HEK293T (cell line): ENCODE measurements at regions of chr4 and their contacts with region 1.

Region 1: GRCh38 chr4:41257257-41257901 is 651 bp downstream of the UCHL1 start:
- DNase-seq: peak; percentile 30

Region 2: GRCh38 chr4:41081847-41082246 is 175.5 kb before region 1 on chr4:
- CTCF ChIA-PET with region 1: no interaction called
- POLR2A ChIA-PET with region 1: no interaction called
- DNase-seq: no peak

Region 3: DNA sequence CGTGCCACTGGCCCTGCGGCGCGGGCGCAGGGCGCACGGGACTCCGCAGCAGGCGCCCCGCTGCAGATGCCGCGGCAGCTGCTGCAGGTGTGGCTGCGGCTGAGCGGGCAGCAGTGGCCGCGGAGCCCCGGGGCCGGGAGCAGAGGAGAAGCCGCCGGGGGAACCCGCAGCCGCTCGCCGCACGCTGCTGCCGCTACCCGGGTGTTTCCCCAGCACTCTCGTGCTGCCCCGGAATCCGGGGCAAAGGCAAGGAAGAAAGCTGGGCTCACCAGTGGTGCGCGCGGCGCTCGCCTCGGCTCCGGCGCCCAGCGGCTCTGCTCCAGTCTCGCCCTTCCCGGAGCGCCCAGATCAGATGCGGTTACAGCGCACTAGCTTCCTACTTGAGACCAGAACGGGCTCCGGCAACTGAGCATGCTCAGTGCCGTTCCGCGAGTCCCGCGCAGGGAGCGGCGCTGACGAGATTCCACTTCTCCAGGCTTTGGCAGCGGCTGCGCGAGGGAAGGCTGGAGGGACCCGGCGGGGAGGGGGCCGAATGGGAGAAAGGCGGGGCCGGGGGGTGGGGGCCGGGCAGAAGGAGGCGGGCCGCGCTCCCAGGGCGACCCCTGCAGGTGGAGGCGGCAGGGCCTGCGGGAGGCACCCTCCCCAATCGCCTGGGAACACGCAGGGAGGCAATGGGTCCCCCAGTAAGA is 43.1 kb before region 1 on chr4 and contains the start of gene APBB2:
- CTCF ChIA-PET with region 1: interaction called, 4 read pairs
- POLR2A ChIA-PET with region 1: interaction called, 36 read pairs
- DNase-seq: peak; percentile 82

Region 4: GRCh38 chr4:41221850-41222645 is 35.3 kb before region 1 on chr4:
- CTCF ChIA-PET with region 1: no interaction called
- POLR2A ChIA-PET with region 1: interaction called, 36 read pairs
- DNase-seq: no peak

Region 5: GRCh38 chr4:41232406-41232805 is 25.0 kb before region 1 on chr4:
- CTCF ChIA-PET with region 1: no interaction called
- POLR2A ChIA-PET with region 1: interaction called, 11 read pairs
- DNase-seq: no peak

Region 6: GRCh38 chr4:41241919-41242318 is 15.5 kb before region 1 on chr4:
- CTCF ChIA-PET with region 1: no interaction called
- POLR2A ChIA-PET with region 1: interaction called, 28 read pairs
- DNase-seq: no peak

Region 7: GRCh38 chr4:41268022-41268421 is 10.6 kb after region 1 on chr4:
- CTCF ChIA-PET with region 1: no interaction called
- POLR2A ChIA-PET with region 1: interaction called, 21 read pairs
- DNase-seq: no peak

Region 8: GRCh38 chr4:41303372-41304118 is 46.2 kb after region 1 on chr4:
- CTCF ChIA-PET with region 1: no interaction called
- POLR2A ChIA-PET with region 1: no interaction called
- DNase-seq: no peak